ENCODE measurements at regions of chr19 and their contacts with region 1.

Region 1: DNA sequence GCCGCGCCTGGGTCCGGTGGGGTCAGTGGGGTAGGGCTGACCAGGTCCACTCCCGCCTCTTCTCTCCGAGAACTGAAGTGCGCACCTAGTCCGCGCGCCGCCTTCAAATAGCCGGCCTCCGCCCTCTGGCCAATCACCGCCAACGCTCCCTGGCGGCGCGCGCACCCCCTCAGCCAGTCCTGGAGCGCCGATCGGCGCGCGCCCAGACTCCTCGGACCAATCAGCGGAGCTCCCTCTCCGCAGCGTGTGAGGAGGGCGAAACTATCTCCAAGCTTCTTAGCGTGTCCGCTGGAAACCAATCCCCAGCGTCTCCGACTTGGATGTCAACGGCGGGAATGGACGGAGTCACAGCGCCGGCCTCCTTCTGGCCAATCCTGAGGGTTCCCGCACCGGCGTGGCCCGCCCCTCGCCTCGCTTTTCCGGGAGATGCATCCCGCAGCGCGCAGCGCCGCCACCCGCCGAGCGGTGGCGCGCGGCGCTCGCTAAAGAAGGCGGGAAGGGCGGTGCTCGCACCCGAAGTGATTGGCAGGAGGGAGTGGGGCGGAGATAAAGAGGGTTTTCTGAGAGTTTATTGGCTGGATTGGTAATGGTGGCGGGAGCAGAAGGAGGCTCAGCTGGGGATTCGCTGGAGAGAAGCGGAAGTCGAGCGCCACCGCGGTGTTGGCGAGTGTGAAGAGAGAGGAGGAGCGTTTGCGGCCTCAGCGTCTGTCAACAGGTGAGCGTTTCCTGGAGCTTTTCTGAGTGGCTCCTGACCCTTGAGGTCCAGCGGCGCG is at the start of gene ASF1B:
- DNase-seq: peak; percentile 98 to 100 (median 100)
- H3K4me3 ChIP-seq: peak within 1 kb of the TSS; percentile 27 to 84 (median 58)
- H3K27ac ChIP-seq: peak within 1 kb of the TSS; percentile 91 to 99 (median 94)
- H3K4me1 ChIP-seq: peaks cover 4 to 24% of the 10 kb centered on the region in 2 donors
- H3K27me3 ChIP-seq: no peaks in the 10 kb centered on the region
- CTCF ChIP-seq: peak; percentile 77 to 98 (median 80)
- POLR2A ChIP-seq: peak; percentile 34 to 89
- total RNA-seq, gene ASF1B: 0.48 to 17.2 (median 2.4) TPM

Region 2: DNA sequence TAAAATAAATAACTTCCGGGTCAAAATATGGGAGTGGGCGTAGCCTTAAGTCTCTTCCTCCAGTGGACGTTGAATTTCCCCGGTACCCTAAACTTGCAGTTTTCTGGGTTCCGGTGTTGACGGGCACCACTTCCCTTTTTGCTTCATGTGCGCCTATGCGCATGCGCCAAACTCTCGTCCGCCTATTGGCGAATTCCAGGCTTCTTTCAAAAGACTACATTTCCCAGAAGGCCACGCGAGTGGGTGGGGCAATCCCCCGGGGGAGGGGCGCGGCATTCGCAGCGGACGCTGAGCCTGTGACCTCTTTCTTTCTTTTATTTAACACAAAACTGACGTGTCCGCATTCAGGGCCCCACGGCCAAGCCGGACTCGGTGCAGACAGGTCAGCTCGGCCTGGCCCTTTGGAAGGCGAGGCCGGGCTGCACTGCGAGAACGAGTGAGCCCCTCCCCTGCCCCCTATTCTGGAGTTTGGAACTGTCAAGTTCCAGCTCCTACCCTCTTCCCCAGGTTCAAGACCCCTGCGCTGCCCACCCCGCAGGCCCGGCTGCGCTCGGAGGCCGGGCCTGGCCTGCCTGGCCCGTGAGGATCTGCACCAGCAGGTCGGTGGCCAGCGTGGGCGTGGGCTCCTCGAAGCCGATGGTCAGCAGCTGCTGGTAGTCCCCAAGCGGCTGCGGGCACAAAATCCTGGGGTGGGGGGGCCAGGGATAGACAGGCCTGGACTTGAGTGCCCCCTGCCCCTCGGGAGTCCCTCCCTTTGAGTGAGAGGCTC is 55.2 kb before region 1 on chr19:
- intact Hi-C with region 1: loop called in 1 of 2 experiments (anchors 10 kb)
- DNase-seq: peak; percentile 99 to 100 (median 99)
- H3K4me3 ChIP-seq: peak overlapping the region; percentile 2 to 95 (median 82)
- H3K27ac ChIP-seq: peak overlapping the region; percentile 86 to 94 (median 89)
- H3K4me1 ChIP-seq: peaks cover 14 to 16% of the 10 kb centered on the region in 2 donors
- H3K27me3 ChIP-seq: no peaks in the 10 kb centered on the region
- CTCF ChIP-seq: peak in 1 of 6 experiments; percentile 8
- POLR2A ChIP-seq: peak; percentile 83 to 93

Measured in adrenal gland (tissue), 19 donors.